ENCODE measurements at regions of chr22 and their contacts with region 1.

Region 1: GRCh38 chr22:17213976-17214375 is 5.3 kb downstream of the ADA2 start:
- DNase-seq: no peak
- ATAC-seq: no peak
- H3K4me3 Mint-ChIP-seq: no peak overlapping the region
- H3K27ac Mint-ChIP-seq: peak overlapping the region; percentile 98
- H3K4me1 Mint-ChIP-seq: peaks cover 53% of the 10 kb centered on the region
- H3K27me3 Mint-ChIP-seq: no peaks in the 10 kb centered on the region
- CTCF ChIP-seq: no peak

Region 2: DNA sequence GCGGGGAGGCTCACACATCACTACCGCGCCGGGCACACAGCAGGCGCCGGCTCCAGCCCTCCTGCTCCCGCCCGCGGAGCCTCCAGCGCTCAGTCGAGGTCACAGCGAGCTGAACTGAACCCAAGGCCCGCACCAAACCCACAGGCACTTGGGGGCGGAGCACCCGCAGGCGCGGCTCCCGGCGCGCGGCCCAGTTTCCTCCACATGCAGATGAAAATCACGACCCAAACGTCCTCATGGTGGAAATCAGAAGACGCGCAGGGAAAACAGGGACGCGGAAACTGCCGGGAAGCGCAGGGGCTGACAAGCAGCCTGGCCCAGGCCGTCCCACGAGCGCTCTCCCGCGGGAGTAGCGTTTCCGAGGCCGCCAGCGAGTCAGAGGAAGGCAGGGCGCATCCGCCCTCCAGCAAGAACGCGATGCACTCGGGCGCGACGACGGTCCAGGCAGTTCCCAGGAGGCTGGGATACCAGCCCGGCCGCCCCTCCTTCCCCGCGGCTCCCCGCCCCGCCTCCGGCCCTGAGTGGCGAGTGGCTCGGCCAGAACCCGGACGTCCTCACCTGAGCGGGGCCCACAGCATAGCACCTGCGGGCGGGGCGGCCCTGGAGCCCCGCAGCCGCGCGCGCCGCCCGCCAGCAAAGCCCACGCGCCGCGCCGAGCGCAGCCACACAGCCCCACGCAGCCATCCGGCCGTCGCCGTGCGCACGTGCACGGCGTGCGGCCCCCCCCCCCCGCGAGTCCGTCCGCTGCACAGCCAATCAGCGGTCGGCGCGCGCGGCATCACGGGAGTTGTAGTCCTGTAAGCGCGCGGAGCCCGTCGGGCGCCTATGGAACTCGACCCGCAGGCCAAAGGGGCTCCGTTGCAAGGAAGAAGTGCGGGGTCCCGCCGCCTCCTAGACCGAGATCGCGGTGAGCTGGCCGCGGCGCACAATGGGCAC is 55.1 kb before region 1 on chr22 and contains the start of gene HDHD5:
- CTCF ChIA-PET with region 1: no interaction called
- POLR2A ChIA-PET with region 1: interaction called, 3 read pairs
- intact Hi-C with region 1: loop called (anchors 2 kb)
- DNase-seq: peak; percentile 82
- ATAC-seq: peak; percentile 91
- H3K4me3 Mint-ChIP-seq: peak within 1 kb of the TSS; percentile 83
- H3K27ac Mint-ChIP-seq: peak within 1 kb of the TSS; percentile 59
- H3K4me1 Mint-ChIP-seq: peaks cover 26% of the 10 kb centered on the region
- H3K27me3 Mint-ChIP-seq: no peaks in the 10 kb centered on the region
- CTCF ChIP-seq: no peak
- total RNA-seq, gene HDHD5: 23.9 and 25.2 TPM in 2 replicates

Region 3: DNA sequence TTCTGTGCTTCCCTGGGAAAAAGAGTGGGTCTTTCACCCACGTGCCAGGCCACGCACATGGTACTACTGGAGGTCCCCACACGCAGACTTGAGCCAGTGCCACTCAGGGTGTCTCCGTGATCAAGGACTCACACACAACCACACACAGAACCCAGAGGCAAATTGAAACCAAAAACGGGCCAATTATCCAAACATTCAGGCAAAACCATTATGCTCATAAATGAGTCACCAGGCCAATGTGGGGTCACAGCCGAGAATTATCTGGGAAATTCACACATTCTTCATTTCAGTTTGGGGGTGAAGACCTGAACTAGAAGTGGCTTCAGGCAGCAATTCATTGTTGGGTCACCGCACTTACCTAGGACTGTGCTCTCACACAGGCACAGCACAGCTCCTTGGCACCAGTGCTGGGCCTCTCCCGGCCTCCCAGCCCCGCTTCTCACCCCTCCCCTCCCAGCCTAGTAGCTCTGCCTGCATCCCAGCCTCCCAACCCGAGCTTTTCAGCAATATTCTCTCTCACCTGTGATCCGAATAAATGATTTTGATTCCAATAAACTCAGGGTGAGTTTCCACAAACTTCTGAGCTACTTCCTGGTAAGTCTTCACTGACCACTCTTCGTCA is 22.7 kb before region 1 on chr22:
- CTCF ChIA-PET with region 1: no interaction called
- POLR2A ChIA-PET with region 1: no interaction called
- intact Hi-C with region 1: no loop called
- DNase-seq: no peak
- ATAC-seq: no peak
- H3K4me3 Mint-ChIP-seq: no peak overlapping the region
- H3K27ac Mint-ChIP-seq: no peak overlapping the region
- H3K4me1 Mint-ChIP-seq: no peaks in the 10 kb centered on the region
- H3K27me3 Mint-ChIP-seq: no peaks in the 10 kb centered on the region
- CTCF ChIP-seq: no peak

Region 4: GRCh38 chr22:17228725-17229126 is 14.8 kb after region 1 on chr22:
- CTCF ChIA-PET with region 1: no interaction called
- POLR2A ChIA-PET with region 1: interaction called, 13 read pairs
- intact Hi-C with region 1: no loop called
- DNase-seq: no peak
- ATAC-seq: peak; percentile 84
- H3K4me3 Mint-ChIP-seq: peak overlapping the region; percentile 52
- H3K27ac Mint-ChIP-seq: peak overlapping the region; percentile 62
- H3K4me1 Mint-ChIP-seq: peaks cover 19% of the 10 kb centered on the region
- H3K27me3 Mint-ChIP-seq: no peaks in the 10 kb centered on the region
- CTCF ChIP-seq: no peak

Region 5: DNA sequence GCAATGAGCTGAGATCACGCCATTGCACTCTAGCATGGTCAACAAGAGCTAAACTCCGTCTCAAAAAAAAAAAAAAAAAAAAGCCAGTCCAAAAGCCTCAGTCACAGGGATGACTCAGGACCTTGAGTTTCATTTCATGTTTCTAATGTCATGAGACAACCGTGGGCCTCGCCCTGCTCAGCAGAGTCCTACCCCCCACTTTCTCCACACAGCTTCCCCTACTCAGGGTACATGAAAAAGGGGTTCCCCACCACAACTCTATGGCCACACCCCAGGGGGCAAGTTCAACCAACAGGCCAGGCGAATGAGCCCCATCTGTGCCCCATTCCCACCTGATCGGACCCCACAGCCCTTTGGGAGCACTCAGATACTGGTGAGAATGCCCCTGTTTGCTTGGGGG is 29.5 kb after region 1 on chr22:
- CTCF ChIA-PET with region 1: no interaction called
- POLR2A ChIA-PET with region 1: interaction called, 22 read pairs
- intact Hi-C with region 1: loop called (anchors 1 kb)
- DNase-seq: peak; percentile 44
- ATAC-seq: peak; percentile 97
- H3K4me3 Mint-ChIP-seq: peak overlapping the region; percentile 55
- H3K27ac Mint-ChIP-seq: peak overlapping the region; percentile 89
- H3K4me1 Mint-ChIP-seq: peaks cover 28% of the 10 kb centered on the region
- H3K27me3 Mint-ChIP-seq: no peaks in the 10 kb centered on the region
- CTCF ChIP-seq: no peak

Region 6: DNA sequence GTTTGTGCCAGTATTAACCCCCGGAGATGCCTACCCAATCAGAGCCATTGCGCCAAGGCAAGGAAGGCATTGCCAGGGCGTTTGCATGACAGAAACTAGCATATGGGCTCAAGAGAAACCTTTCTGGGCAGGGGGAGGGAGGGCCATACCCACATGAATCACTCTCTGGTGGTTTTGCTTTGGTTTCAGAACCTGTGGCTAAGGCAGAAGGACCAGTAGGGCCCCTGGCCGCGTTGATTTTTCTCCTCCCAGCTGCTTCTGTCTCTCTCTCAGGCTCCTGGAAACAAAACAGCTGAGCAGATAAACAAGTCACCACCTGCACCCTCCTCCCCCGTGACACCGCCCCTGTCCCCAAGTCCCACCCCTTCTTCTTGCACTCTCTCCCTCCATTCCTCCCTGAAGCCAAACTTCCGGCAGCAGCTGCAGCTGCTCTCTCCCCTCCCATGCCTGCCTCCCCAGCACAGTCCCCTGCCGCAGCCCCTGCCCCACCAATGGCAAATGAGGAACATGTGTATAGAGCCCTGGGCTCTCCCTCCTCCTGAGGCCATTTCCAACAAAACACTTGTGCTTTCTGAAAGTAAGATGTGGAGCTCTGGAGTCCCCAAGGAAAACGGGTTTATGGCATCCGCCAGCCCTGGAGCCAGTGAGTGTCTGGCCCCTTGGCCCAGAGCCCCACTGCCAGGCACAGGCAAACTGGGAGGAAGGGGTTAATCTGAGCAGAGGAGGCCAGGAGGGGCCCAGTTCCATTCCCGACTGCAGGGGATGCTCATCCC is 44.2 kb after region 1 on chr22:
- CTCF ChIA-PET with region 1: no interaction called
- POLR2A ChIA-PET with region 1: interaction called, 52 read pairs
- intact Hi-C with region 1: loop called (anchors 1 kb)
- DNase-seq: peak; percentile 60
- ATAC-seq: peak; percentile 92
- H3K4me3 Mint-ChIP-seq: peak overlapping the region; percentile 65
- H3K27ac Mint-ChIP-seq: peak overlapping the region; percentile 97
- H3K4me1 Mint-ChIP-seq: peaks cover 30% of the 10 kb centered on the region
- H3K27me3 Mint-ChIP-seq: no peaks in the 10 kb centered on the region
- CTCF ChIP-seq: no peak

Region 7: DNA sequence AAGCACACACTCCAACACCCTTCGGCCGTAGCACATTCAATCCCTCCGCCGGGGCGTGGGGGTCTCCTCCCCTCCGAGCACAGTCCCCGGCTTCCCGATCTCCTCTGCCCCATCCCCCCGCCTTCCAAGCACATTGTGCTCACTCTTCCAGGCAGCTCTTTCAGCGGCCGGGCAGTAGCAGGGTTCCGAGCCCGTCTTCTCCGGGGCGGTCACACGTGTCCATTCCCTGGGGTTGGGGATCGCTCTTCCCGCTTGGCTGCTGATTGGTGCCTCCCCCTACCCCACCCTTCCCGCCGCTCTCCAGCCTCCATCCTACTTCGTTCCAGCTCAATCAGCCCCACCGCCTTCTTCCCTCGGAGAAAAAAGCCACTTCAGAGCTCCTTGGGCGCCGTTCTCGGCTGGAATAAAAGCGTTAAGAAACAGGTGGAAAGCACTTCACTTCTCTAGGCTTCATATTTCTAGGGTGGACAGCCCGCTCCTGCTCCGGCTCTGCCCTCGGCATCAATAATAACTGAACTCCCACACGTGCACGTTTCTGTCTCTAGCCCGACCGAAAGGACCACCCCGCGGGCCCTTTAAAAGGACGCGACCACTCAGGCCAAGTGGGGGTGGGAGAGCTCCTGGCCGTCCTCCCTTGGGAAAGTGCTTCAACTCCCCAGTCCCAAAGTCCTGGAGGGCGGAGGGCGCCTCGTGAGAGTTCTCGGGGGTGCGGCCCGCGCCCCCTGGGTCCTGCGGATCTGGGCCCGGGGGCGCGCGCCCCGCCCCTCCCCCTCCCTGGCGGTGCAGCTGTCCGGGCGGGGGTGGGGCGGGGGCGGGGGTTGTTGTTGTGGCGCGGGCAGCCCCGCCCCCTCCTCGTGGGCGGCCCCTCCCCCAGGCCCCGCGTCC is 154.8 kb after region 1 on chr22:
- CTCF ChIA-PET with region 1: interaction called, 4 read pairs
- POLR2A ChIA-PET with region 1: interaction called, 4 read pairs
- intact Hi-C with region 1: loop called (anchors 1 kb)
- DNase-seq: peak; percentile 44
- ATAC-seq: peak; percentile 56
- H3K4me3 Mint-ChIP-seq: peak overlapping the region; percentile 80
- H3K27ac Mint-ChIP-seq: peak overlapping the region; percentile 10
- H3K4me1 Mint-ChIP-seq: peaks cover 27% of the 10 kb centered on the region
- H3K27me3 Mint-ChIP-seq: peaks cover 39% of the 10 kb centered on the region
- CTCF ChIP-seq: no peak

Measured in activated B cell treated with CpG ODN at 0.5 μM for 24 hours (primary cell).